Activated CD4-positive, alpha-beta memory T cell treated with anti-CD3 and anti-CD28 coated beads for 36 hours (primary cell): ENCODE measurements at regions of chr19 and their contacts with region 1.

Region 1: DNA sequence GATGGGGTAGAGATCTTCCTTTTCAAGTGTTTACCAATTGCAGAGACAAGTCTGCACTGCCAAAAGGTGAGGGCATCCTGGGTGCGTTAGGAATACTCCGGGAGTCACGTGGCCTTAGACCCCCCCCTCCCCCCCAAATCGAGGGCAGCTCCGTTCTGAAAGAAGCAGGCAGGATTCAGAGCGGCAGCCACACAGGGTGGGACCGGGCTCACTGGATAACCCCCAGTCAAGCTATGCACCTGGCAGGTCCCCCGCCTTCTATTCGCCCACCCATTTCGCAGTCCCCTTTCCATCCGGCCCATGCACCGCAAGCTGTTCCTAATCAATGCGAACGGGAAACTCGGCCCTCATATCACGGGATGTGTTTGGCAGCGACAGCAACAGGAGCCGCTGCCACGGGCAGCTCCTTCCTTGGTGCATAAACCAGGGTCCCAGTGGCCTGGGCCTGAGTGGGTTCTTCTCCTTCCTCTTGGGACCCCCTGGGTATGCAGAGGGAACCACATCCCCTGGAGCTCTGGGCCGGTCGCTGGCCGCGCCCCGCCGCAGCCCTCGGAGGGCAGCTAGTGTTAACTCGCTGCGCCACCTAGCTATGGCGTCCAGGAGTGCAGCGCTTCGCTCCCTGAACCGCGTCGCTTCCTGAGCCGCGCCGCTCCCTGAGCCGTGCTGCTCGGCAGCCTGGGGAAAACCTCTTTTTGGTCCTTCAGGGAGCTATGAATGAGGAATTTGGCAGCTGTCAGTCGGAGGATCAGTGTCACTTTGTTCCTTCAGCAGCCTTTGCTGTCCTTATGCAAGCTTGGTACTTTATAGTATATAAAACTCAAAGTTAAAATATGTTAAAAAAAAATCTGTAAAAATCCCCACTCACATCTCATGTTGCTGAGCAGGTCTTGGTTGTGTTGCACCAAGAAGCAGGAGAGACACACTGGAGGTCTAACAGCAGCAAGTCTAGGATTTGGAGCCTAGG is 41.4 kb downstream of the LYL1 start:
- DNase-seq: peak; percentile 85
- H3K4me3 Mint-ChIP-seq: peak overlapping the region; percentile 70
- H3K27ac Mint-ChIP-seq: no peak overlapping the region
- H3K4me1 Mint-ChIP-seq: peaks cover 8% of the 10 kb centered on the region
- H3K27me3 Mint-ChIP-seq: peaks cover 10% of the 10 kb centered on the region

Region 2: GRCh38 chr19:12983542-12984142 is 77.6 kb before region 1 on chr19:
- CTCF ChIA-PET with region 1: interaction called, 268 read pairs
- POLR2A ChIA-PET with region 1: no interaction called
- intact Hi-C with region 1: loop called (anchors 1 kb)
- DNase-seq: peak; percentile 88
- H3K4me3 Mint-ChIP-seq: no peak overlapping the region
- H3K27ac Mint-ChIP-seq: no peak overlapping the region
- H3K4me1 Mint-ChIP-seq: no peaks in the 10 kb centered on the region
- H3K27me3 Mint-ChIP-seq: no peaks in the 10 kb centered on the region

Region 3: DNA sequence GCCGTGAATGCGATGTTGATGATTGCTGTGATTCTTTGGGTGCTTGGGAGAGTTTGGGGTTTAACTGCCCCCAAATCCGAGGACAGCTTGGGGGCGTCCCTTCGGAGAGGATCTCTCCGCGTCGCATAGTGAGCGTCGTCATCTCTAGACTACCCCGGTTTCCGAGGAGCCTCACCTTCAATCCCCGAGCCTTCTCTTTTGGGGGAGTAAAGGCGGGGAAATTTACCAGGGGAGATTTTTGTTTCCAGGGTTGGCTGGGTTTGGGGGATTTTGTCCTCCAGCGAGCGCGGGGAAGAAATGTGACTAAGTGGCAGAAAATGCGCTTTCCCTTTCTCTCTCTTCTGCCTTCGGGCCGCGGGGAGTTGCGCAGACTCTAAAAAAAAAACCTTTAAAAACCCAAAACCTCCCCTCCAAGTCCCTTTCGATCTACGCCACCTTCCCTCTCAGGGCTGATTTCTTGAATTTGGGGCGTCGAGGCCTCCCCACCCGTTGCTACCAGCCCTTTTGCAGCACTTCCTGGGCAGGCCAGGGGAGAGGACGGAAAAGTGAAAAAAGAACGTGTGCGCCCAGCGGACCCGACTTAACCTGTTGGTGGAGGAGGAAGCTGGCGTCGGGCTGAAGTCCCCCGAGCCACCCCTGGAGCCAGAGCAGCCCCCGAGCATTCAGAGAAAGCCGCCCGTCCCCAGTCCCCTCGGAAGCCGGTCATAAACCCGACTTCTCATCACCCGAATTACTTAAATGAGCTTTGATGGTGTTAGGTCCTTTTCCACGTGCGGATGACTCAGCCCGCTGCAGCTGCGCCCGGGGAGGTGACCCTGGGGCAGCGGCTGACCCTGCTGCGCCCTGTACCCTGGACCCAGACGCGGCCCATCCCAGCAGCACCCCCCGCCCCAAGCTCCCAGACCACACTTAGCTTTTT is 48.3 kb before region 1 on chr19:
- CTCF ChIA-PET with region 1: interaction called, 12 read pairs
- POLR2A ChIA-PET with region 1: no interaction called
- intact Hi-C with region 1: no loop called
- DNase-seq: peak; percentile 59
- H3K4me3 Mint-ChIP-seq: peak overlapping the region; percentile 79
- H3K27ac Mint-ChIP-seq: peak overlapping the region; percentile 66
- H3K4me1 Mint-ChIP-seq: peaks cover 21% of the 10 kb centered on the region
- H3K27me3 Mint-ChIP-seq: peaks cover 58% of the 10 kb centered on the region

Region 4: GRCh38 chr19:13033819-13034611 is 27.2 kb before region 1 on chr19:
- CTCF ChIA-PET with region 1: interaction called, 42 read pairs
- POLR2A ChIA-PET with region 1: no interaction called
- intact Hi-C with region 1: no loop called
- DNase-seq: peak; percentile 60
- H3K4me3 Mint-ChIP-seq: no peak overlapping the region
- H3K27ac Mint-ChIP-seq: no peak overlapping the region
- H3K4me1 Mint-ChIP-seq: peaks cover 5% of the 10 kb centered on the region
- H3K27me3 Mint-ChIP-seq: no peaks in the 10 kb centered on the region

Region 5: GRCh38 chr19:13079542-13079986 is 18.3 kb after region 1 on chr19:
- CTCF ChIA-PET with region 1: interaction called, 21 read pairs
- POLR2A ChIA-PET with region 1: no interaction called
- intact Hi-C with region 1: no loop called
- DNase-seq: no peak
- H3K4me3 Mint-ChIP-seq: no peak overlapping the region
- H3K27ac Mint-ChIP-seq: no peak overlapping the region
- H3K4me1 Mint-ChIP-seq: no peaks in the 10 kb centered on the region
- H3K27me3 Mint-ChIP-seq: no peaks in the 10 kb centered on the region